Activated CD8-positive, alpha-beta T cell treated with anti-CD3 and anti-CD28 coated beads for 36 hours (primary cell): ENCODE measurements at regions of chr19 and their contacts with region 1.

Region 1: DNA sequence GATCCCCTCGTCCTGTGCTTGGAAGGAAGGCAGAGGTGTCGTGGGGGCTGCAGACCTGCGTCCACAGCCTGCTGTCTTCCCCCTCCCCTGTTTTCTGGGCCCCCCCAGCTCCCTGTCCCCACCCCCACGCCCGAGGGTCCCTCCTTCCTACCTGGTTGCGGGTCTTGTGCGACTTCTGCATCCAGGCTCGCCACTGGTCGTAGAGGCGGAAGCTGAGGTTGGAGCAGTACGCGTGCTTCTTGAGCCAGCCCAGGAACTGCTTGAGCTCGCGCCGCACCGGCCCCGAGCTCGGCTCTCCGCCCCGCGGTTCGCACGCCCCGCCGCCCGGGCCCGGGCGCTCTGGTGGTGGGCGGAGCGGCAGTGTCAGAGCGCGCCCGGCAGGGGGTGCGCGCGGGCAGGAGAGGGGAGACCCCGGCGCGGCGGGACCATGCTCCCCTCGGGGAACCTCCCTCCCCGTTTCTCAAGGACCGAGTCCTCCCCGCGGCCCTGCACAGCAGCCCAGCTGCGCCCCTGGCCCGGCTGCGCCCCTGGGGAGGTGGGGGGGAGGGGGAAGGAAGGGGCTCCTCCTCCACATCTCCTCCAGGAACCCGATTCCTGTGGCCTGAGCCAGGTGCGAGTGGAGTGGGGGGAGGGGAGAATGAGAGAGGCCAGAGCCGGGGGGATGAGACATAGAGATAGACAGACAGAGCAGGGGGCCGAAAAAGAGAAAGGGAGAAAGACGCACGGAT is 5.7 kb downstream of the REX1BD start:
- DNase-seq: peak; percentile 79
- ATAC-seq: peak; percentile 80
- H3K4me3 Mint-ChIP-seq: peak overlapping the region; percentile 67
- H3K27ac Mint-ChIP-seq: peak overlapping the region; percentile 41
- H3K4me1 Mint-ChIP-seq: peaks cover 31% of the 10 kb centered on the region
- H3K27me3 Mint-ChIP-seq: peaks cover 3% of the 10 kb centered on the region
- CTCF ChIP-seq: peak; percentile 93

Region 2: DNA sequence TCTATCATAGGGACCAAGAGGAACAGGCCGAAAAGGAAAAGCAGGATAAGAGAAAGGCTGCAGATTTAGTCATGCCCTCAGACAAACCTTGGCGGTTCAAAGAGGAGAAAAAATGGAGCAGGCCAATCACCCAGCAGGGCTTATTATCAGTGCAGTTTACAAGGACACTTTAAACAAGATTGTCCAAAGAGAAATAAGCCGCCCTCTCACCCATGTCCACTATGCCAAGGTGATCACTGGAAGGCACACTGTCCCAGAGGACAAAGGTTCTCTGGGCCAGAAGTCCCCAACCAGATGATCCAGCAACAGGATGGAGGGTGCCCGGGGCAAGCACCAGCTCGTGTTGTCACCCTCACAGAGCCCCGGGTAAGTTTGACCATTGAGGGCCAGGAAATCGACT is 13.9 kb before region 1 on chr19:
- CTCF ChIA-PET with region 1: interaction called, 18 read pairs
- POLR2A ChIA-PET with region 1: interaction called, 11 read pairs
- intact Hi-C with region 1: no loop called
- DNase-seq: no peak
- ATAC-seq: no peak
- H3K4me3 Mint-ChIP-seq: no peak overlapping the region
- H3K27ac Mint-ChIP-seq: no peak overlapping the region
- H3K4me1 Mint-ChIP-seq: peaks cover 7% of the 10 kb centered on the region
- H3K27me3 Mint-ChIP-seq: no peaks in the 10 kb centered on the region
- CTCF ChIP-seq: no peak

Region 3: DNA sequence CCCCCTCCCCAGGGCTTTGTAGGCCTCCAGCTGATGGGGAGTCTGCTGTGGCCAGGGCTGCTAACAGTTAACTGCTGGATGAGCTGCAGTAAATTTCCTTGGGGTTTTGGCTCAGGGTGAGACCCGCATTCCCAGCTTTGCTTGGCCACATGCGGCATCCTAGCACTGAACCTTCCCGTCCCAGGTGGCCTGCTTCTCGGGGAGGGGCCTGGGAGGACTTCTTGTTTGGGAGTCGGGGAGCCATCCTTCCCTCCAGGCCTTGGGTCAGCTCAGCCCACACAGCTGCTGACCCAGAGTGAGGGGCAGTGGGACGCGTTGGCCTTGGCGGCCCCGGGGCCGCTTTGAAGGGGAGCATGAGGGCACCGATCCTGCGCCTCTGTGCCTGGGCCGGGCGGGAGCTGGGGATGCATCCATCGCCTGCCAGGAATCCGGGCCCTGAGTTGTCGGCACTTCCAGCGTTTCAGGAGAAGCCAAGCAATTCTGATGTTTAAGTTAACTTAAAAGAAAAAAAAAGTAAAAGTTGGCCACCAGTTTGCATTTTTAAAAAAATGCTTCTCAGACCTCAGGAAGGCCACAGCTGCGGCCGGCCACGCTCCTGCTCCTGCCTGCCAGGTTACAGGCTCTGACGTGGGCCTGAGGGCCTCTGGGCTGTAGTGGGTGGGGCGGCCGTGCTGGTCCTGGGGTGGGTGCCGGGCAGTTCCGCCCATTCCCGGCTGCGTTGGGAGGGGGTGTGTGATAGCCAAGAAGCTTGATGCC is 116.9 kb after region 1 on chr19:
- CTCF ChIA-PET with region 1: no interaction called
- POLR2A ChIA-PET with region 1: no interaction called
- intact Hi-C with region 1: no loop called
- DNase-seq: no peak
- ATAC-seq: no peak
- H3K4me3 Mint-ChIP-seq: no peak overlapping the region
- H3K27ac Mint-ChIP-seq: no peak overlapping the region
- H3K4me1 Mint-ChIP-seq: peaks cover 34% of the 10 kb centered on the region
- H3K27me3 Mint-ChIP-seq: no peaks in the 10 kb centered on the region
- CTCF ChIP-seq: no peak

Region 4: DNA sequence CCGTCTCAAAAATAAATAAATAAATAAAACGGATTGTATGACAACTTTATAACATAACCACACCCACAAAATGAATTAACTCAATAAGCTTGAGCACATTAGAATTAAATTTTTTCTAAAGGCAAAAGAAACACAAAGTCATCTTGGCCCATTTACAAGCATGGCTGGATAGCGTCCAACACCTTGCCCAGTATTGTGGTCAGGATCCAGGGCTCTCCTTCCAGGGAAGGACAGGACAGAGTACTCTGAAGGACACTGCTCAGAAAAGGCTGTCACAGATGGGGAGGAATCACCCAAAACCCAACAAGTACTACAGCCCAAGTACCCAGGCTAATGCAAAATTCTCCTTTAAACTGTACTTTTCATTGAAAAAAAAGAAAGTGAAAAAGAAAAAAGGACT is 412.0 kb after region 1 on chr19:
- CTCF ChIA-PET with region 1: no interaction called
- POLR2A ChIA-PET with region 1: no interaction called
- intact Hi-C with region 1: no loop called
- DNase-seq: no peak
- ATAC-seq: no peak
- H3K4me3 Mint-ChIP-seq: no peak overlapping the region
- H3K27ac Mint-ChIP-seq: no peak overlapping the region
- H3K4me1 Mint-ChIP-seq: no peaks in the 10 kb centered on the region
- H3K27me3 Mint-ChIP-seq: no peaks in the 10 kb centered on the region
- CTCF ChIP-seq: no peak